ENCODE measurements at regions of chr1 and their contacts with region 1.

Region 1: GRCh38 chr1:198880818-198881597 is 242.2 kb downstream of the PTPRC start:
- DNase-seq: no peak
- H3K4me3 Mint-ChIP-seq: no peak overlapping the region
- H3K27ac Mint-ChIP-seq: peak overlapping the region; percentile 71
- H3K4me1 Mint-ChIP-seq: peaks cover 59% of the 10 kb centered on the region
- H3K27me3 Mint-ChIP-seq: no peaks in the 10 kb centered on the region

Region 2: GRCh38 chr1:198734323-198735008 is 146.5 kb before region 1 on chr1:
- intact Hi-C with region 1: loop called (anchors 5 kb)
- DNase-seq: no peak
- H3K4me3 Mint-ChIP-seq: no peak overlapping the region
- H3K27ac Mint-ChIP-seq: peak overlapping the region; percentile 73
- H3K4me1 Mint-ChIP-seq: peaks cover 79% of the 10 kb centered on the region
- H3K27me3 Mint-ChIP-seq: no peaks in the 10 kb centered on the region

Region 3: GRCh38 chr1:198893763-198894444 is 12.9 kb after region 1 on chr1:
- intact Hi-C with region 1: loop called (anchors 2 kb)
- DNase-seq: no peak
- H3K4me3 Mint-ChIP-seq: no peak overlapping the region
- H3K27ac Mint-ChIP-seq: no peak overlapping the region
- H3K4me1 Mint-ChIP-seq: peaks cover 56% of the 10 kb centered on the region
- H3K27me3 Mint-ChIP-seq: no peaks in the 10 kb centered on the region

Region 4: GRCh38 chr1:198907423-198907746 is 26.4 kb after region 1 on chr1:
- intact Hi-C with region 1: loop called (anchors 2 kb)
- DNase-seq: no peak
- H3K4me3 Mint-ChIP-seq: peak overlapping the region; percentile 27
- H3K27ac Mint-ChIP-seq: peak overlapping the region; percentile 86
- H3K4me1 Mint-ChIP-seq: peaks cover 68% of the 10 kb centered on the region
- H3K27me3 Mint-ChIP-seq: no peaks in the 10 kb centered on the region

Region 5: DNA sequence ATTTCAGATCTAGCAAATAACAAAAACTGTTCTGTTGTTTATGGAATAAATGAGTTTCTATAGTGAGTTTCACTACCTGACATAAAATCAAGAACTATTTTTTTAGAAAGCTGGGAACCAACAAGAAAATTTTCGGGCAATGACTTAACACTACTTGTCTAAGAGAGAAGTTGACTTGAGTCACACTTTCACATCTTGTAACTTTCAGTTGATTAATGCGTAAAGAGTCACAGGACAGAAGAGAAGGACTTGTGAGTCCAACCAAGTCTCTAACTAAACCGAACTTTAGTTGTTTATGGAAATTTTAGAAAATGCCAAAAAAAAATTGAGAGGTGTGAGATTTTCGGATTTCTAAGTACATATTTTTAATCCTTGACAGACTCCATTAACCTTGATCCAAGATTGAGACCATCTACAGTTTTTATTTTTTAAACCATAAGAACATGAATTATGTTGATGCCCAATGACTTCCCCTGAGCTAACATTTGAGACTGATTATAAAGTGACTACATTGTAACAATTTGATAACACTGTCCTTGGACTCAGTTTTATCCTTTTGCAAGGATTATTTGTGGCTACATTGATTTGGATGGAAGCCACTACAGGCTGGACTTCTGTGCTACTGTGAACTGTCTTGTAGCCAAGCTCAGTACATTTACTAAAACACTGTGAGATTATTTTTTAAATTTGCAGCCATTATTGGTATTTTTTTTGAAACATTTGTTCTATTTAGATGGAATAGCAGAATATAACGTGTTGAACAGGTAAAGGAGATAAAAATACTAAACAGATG is 41.8 kb after region 1 on chr1:
- intact Hi-C with region 1: loop called (anchors 1 kb)
- DNase-seq: no peak
- H3K4me3 Mint-ChIP-seq: peak overlapping the region; percentile 78
- H3K27ac Mint-ChIP-seq: peak overlapping the region; percentile 90
- H3K4me1 Mint-ChIP-seq: peaks cover 90% of the 10 kb centered on the region
- H3K27me3 Mint-ChIP-seq: no peaks in the 10 kb centered on the region

Measured in activated T-helper 1 cell treated with anti-CD3 and anti-CD28 coated beads, Interleukin-12 subunit alpha, Interleukin-12 subunit beta, Interleukin-2, Interleukin-4 antibody, amounts not matched to agents 30 ng/mL and 10 ng/mL and 1 ng/mL, durations not matched to agents 14 hours and 24 hours and 36 hours (primary cell).